ENCODE measurements at regions of chr11 and their contacts with region 1.

Region 1: DNA sequence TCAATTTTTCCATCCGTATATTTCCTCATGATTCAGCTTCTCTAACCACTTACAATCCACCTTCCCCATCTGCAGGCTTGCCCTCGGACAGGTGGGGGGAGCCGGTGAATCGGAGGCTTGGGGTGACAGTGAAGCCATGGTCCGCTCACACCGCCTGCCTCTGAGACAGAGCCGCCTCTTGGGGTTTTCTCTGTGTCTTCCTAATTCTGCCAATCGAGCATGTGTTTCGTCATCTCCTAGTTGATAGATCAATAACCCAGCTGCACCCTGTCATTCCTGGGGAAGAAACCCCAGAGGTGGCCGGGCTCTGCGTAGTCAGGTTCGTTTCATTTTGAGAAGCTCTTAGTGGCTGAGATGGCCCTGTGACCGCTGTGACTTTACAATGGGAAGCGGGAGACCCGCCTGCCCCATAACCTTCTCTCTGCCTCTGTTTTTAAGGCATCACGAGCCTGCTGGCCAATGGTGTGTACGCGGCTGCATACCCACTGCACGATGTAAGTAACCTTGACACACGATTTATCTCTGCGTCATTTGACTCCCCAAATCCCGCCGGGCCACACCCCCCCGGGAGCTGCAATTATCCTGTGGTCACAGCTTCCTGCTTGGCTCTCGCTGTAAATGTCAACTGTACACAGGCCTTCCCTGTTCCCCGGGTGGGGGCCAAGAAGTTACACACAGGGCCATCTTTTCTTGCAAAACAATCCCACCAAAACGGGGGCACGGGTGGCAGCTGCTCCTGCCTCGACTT is 33.3 kb downstream of the ANO1 start:
- DNase-seq: peak; percentile 80 to 85
- ATAC-seq: peak; percentile 76 to 94 (median 86)
- H3K4me3 ChIP-seq: no peak overlapping the region
- H3K27ac ChIP-seq: peak overlapping the region; percentile 53 to 89 (median 76)
- H3K4me1 ChIP-seq: peaks cover 2 to 34% (median 21%) of the 10 kb centered on the region in 9 donors
- H3K27me3 ChIP-seq: no peaks in the 10 kb centered on the region
- CTCF ChIP-seq: no peak

Region 2: GRCh38 chr11:69899957-69900821 is 211.3 kb before region 1 on chr11:
- intact Hi-C with region 1: no loop called
- DNase-seq: no peak
- ATAC-seq: peak in 6 of 8 donors; percentile 42 to 83 (median 54)
- H3K4me3 ChIP-seq: no peak overlapping the region
- H3K27ac ChIP-seq: no peak overlapping the region
- H3K4me1 ChIP-seq: peaks cover 0 to 11% (median 6%) of the 10 kb centered on the region in 9 donors
- H3K27me3 ChIP-seq: peaks cover 0 to 11% (median 3%) of the 10 kb centered on the region in 7 donors
- CTCF ChIP-seq: no peak

Region 3: DNA sequence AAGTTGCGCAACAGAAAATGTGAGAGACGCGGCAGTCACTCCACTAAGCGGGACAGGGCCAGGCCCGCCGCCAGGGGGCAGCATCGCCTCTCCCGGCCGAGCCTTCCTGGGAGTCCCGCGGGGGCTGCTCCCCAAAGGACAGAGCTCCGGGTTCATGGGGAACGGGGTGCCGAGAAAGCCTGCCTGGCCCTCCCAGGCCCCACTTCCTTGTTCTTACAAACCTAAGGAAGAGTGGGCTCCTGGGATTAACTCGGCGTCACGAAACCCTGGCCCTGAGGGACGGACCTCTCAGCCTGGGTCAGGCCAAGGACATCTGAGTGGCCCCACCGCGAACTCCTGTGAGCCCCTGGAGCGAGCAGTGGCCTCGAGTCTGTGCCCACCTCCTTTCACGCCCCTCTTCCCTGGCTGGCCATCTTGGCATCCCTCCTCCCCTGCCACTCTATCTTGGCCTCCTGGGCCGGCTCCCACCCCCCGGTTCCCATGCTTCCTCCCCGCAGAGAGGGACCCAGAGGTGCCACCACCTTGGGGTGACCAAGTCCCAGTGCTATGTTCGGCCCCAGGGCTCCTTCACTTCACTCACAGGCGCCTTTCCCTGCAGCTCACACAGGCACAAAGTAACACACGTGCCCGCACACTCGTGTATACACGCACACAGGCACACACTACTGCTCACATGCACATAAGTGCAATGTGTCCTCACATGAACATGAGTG is 192.3 kb before region 1 on chr11:
- intact Hi-C with region 1: loop called in 1 of 10 experiments (anchors 5 kb)
- DNase-seq: peak; percentile 80 to 86
- ATAC-seq: peak; percentile 63 to 79 (median 72)
- H3K4me3 ChIP-seq: peak overlapping the region in 3 of 10 donors; percentile 2 to 33 (median 9)
- H3K27ac ChIP-seq: peak overlapping the region in 9 of 10 donors; percentile 2 to 80 (median 56)
- H3K4me1 ChIP-seq: peaks cover 13 to 37% (median 32%) of the 10 kb centered on the region in 9 donors
- H3K27me3 ChIP-seq: peaks cover 0 to 21% (median 4%) of the 10 kb centered on the region in 7 donors
- CTCF ChIP-seq: peak; percentile 89 to 99 (median 96)